ENCODE measurements at regions of chr9 and their contacts with region 1.

Region 1: DNA sequence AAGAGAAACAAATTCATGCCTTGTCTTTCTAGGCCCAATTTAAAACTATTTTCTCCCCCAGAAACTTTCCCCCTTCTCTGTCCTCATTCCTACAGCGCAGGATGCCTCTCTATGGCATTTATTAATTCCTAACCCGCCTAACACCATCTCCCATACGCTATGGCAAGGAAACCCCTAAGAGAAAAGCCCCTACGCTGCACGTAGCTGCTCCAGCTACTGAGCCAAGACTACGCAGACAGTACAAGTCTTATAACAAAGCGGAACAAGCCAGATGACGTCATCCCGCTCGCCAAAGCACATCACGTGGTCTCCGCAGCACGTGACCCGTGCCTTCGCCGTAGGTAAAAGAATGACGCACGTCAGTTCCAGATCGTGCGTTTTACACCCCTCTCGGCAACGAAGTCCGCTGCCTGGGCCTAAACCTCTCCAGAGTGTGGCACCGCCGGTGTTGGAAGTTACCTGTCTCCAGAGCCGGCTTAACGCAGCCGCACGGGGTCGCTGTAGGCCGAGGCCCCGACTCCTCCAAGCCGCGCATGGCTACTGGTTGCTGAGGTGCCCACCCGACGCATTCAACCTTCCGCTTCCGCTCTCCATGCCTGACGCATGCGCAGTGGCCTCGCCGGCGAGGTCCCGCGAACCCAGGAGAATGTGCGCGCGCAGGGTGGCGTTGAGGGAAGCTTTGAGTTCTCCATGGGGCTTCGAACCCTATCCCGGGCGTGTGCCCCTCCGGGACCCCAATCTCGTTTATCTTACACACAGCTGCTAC is at the start of gene TRMO:
- DNase-seq: peak; percentile 98
- H3K4me3 Mint-ChIP-seq: peak within 1 kb of the TSS; percentile 96
- H3K27ac Mint-ChIP-seq: peak within 1 kb of the TSS; percentile 99
- H3K4me1 Mint-ChIP-seq: peaks cover 60% of the 10 kb centered on the region
- H3K27me3 Mint-ChIP-seq: peaks cover 2% of the 10 kb centered on the region
- total RNA-seq, gene TRMO: 26.6 to 31.8 TPM

Region 2: DNA sequence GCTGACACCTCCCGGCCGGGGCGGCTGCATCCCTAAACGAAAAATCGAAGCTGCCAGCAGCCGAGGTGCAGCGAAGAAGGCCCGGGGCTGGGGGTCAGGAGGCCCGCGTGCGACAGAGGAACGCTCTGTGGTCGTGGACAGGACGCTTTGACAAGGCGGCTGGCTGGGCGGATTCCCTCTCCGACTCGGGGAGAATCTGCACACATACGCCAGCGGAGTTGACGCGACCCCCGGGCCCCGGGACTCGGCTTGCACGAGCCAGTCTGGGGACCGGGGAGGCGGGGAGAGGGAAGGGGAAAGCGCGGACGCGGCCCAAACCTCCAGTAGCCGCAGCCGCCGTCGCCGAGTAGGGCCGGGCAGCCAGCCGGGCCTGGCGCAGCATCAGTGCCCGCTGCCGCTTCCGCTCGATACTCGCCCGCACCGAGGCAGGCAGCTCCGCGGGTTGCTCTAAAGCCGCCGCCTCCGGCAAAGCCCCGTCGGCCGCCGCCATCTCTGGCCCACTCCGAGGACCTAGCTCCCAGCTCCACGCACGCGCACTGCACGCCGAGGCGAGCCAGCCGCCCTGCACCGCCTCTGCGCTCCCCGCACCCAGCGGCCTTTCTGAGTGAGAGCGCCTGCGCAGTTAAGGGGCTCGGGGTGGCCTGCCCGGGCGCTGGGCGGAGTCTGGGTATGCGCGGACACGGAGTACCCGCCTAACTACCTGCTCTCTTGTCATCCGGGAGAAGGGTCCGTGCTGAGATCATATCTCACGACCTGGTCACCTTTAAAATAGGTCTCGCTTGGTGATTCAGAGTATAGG is 225.1 kb before region 1 on chr9 and contains the start of gene XPA:
- CTCF ChIA-PET with region 1: no interaction called
- POLR2A ChIA-PET with region 1: no interaction called
- DNase-seq: peak; percentile 97
- H3K4me3 Mint-ChIP-seq: peak within 1 kb of the TSS; percentile 87
- H3K27ac Mint-ChIP-seq: peak within 1 kb of the TSS; percentile 82
- H3K4me1 Mint-ChIP-seq: peaks cover 53% of the 10 kb centered on the region
- H3K27me3 Mint-ChIP-seq: peaks cover 6% of the 10 kb centered on the region
- total RNA-seq, gene XPA: 15.5 to 15.8 TPM

Region 3: DNA sequence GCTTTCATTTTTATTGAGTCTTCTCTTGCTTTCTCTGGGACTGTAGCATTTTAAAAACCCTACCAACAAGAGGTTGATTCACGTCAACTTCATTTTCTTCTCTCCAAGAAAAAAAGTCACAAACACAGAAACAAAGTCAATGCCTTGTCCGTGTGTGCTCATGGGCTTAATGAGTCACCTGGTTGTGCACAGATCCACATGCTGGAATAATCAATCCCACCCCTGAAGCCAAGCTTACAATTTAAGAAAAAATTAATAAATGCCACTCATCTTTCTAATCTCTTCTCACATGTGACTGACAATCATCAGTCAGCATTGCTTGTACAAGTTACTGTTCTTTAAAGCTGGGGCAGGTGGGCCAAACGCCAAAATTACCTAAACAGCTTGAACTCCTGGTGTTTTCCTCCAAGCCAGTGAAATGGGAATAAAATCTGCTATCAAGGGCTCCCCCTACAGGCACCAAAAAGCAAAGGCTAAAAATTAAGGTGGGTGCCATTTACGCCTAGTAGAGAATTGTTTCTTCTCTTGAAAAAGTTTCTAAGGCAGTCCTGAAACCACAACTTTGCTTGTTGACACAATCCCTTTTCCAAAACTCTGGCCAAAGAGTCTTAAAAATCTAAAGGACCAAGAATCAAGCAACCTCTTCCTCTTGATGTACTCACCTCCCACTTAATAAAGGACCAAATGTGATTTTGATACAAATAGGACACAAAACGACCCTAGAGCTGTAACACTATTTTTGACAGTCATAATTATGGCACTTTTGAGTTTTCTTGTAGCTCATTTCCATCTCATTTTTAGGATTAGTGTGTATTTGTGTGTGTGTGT is 21.2 kb before region 1 on chr9:
- CTCF ChIA-PET with region 1: interaction called, 28 read pairs
- POLR2A ChIA-PET with region 1: interaction called, 4 read pairs
- DNase-seq: peak; percentile 37
- H3K4me3 Mint-ChIP-seq: no peak overlapping the region
- H3K27ac Mint-ChIP-seq: peak overlapping the region; percentile 72
- H3K4me1 Mint-ChIP-seq: peaks cover 51% of the 10 kb centered on the region
- H3K27me3 Mint-ChIP-seq: no peaks in the 10 kb centered on the region

Region 4: DNA sequence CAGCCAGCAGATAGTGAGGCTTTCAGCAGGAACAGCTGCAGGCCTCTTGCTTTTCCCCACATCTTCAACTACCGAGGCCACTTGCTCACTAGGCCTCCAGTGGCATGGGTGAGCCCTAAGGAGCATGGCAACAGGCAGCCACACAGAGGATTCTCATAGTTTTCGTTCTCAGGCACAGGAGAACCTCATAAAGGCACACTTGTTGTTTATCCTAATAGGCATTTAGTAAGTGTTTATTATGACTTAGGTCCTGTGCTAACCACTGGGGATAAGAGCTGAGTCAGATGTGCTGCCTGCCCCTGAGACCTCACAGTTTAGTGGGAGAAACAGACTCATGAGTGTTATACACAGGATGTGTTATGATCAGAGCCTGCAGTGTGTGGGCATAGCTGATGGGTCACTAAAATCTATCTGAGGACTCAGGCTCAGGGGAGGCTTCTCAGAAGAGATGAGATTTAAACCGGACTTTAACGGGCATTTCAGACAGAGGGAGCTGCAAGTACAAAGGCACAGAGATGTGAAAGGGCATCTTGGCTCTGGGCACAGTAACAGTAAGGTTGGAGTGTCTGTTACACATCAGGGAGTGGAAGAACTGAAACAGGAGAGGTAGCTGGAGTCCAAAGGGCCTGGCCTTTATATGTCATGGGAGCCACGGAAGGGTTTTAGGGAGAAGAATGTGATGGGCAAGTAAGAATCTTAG is 36.8 kb after region 1 on chr9:
- CTCF ChIA-PET with region 1: interaction called, 14 read pairs
- POLR2A ChIA-PET with region 1: no interaction called
- DNase-seq: no peak
- H3K4me3 Mint-ChIP-seq: no peak overlapping the region
- H3K27ac Mint-ChIP-seq: no peak overlapping the region
- H3K4me1 Mint-ChIP-seq: peaks cover 4% of the 10 kb centered on the region
- H3K27me3 Mint-ChIP-seq: peaks cover 3% of the 10 kb centered on the region

Region 5: DNA sequence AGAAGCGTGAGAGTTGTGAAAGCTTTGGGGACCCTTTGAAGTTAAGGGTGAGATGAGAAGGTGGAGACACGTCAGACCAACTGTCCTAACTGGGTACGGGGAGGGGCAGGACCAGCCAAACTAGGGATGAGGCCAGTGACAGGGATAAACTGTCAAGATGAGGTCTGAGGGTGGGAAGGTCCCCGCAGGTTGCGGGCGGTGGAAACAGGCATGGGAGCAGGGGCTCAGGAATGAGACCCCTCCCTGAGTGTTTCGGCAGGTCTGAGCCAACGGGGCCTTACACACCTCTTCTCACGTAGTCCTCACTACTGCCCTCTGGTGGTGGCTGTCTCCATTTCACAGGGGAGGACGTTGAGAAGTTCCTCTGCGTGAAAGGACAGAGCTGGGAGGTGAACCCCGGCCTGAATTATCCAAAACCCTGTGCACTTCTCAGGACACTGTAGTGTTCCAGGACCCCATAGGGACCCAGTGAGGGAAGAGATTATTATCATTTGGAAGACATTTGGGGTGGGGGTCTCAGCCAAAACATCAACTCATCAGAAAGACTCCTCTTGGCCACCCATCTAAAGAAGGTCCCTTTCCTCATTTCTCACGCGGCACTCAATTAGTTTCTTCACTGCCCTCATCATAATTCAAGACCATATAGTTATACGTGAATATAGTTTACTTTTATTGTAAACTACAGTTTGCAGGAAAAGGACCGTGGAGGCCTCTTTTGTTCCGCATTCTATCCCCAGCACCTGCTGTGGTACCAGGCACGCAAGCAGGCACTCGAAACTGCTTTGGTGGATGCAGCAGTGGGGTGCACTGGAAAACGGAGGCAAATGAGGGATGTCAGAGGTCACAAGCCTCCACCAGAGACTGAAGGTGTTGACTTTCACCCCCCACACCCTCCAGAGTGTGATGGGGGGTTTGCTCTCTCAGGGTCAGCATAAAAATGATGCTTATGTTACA is 112.7 kb after region 1 on chr9:
- CTCF ChIA-PET with region 1: interaction called, 13 read pairs
- POLR2A ChIA-PET with region 1: no interaction called
- DNase-seq: peak; percentile 94
- H3K4me3 Mint-ChIP-seq: no peak overlapping the region
- H3K27ac Mint-ChIP-seq: no peak overlapping the region
- H3K4me1 Mint-ChIP-seq: peaks cover 15% of the 10 kb centered on the region
- H3K27me3 Mint-ChIP-seq: no peaks in the 10 kb centered on the region